Heart left ventricle (tissue), 16 donors: ENCODE measurements at regions of chr13 and their contacts with region 1.

Region 1: DNA sequence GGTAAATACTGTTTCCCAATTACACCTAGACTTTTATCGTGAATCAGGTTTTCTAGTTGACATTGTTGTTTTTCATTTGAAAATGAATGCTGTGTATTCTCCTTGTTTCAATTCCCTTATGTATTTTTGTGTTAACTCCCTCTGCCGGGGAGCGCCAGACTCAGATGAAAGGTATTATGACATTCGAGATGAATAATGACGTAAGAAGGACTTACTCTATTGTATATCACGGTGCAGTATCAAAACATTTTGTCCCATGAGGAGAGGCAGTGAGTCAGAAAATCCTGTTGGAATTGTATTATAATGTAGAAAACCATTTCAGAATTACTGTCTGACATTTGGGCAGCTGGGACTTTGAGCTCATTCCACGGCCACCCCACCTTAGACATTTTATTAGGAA is 61.6 kb downstream of the LRCH1 start:
- DNase-seq: no peak
- ATAC-seq: peak in 2 of 4 donors; percentile 57 to 68
- H3K4me3 ChIP-seq: no peak overlapping the region
- H3K27ac ChIP-seq: peak overlapping the region in 10 of 12 donors; percentile 1 to 84 (median 78)
- H3K4me1 ChIP-seq: peaks cover 3 to 59% (median 38%) of the 10 kb centered on the region in 12 donors
- H3K27me3 ChIP-seq: no peaks in the 10 kb centered on the region
- CTCF ChIP-seq: peak in 3 of 12 donors; percentile 16 to 24 (median 21)
- POLR2A ChIP-seq: no peak

Region 2: DNA sequence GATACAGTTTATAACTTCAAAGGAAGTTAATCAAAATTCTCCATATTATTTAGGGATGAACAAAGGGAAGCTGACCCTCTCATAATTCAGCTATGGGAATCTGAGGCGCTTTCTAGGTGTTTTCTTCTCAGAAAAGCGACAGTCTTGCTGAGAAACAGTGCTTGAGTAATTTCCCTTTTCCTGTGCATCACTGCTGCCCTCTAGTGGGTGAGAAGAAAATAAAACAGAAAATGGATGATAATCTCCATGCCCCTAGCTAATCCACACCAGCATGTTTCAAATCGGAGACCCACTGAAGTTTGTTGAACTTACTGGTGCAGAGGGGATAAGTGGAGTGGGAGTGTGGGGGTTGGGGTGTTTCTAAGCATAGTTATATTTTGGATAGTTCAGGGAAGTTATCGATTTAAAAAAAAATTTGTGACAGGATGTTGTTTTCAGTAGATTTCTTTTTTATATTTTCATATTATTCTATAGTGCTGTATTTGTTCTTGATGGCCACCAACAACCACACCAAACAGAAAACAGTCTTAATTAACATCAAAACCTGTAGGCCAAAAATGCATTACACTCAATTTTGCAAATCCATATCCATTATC is 454.0 kb before region 1 on chr13:
- intact Hi-C with region 1: no loop called
- DNase-seq: no peak
- ATAC-seq: peak in 3 of 4 donors; percentile 48 to 64 (median 55)
- H3K4me3 ChIP-seq: no peak overlapping the region
- H3K27ac ChIP-seq: peak overlapping the region in 1 of 12 donors; percentile 64
- H3K4me1 ChIP-seq: peaks cover 0 to 46% (median 0%) of the 10 kb centered on the region in 12 donors
- H3K27me3 ChIP-seq: peaks cover 0 to 15% (median 0%) of the 10 kb centered on the region in 9 donors
- CTCF ChIP-seq: peak; percentile 61 to 87 (median 72)
- POLR2A ChIP-seq: no peak

Region 3: GRCh38 chr13:46565808-46566750 is 48.5 kb before region 1 on chr13:
- intact Hi-C with region 1: loop called in 1 of 10 experiments (anchors 10 kb)
- DNase-seq: no peak
- ATAC-seq: peak in 1 of 4 donors; percentile 19
- H3K4me3 ChIP-seq: no peak overlapping the region
- H3K27ac ChIP-seq: peak overlapping the region in 3 of 12 donors; percentile 3 to 21 (median 11)
- H3K4me1 ChIP-seq: peaks cover 0 to 79% (median 38%) of the 10 kb centered on the region in 12 donors
- H3K27me3 ChIP-seq: no peaks in the 10 kb centered on the region
- CTCF ChIP-seq: no peak
- POLR2A ChIP-seq: no peak

Region 4: DNA sequence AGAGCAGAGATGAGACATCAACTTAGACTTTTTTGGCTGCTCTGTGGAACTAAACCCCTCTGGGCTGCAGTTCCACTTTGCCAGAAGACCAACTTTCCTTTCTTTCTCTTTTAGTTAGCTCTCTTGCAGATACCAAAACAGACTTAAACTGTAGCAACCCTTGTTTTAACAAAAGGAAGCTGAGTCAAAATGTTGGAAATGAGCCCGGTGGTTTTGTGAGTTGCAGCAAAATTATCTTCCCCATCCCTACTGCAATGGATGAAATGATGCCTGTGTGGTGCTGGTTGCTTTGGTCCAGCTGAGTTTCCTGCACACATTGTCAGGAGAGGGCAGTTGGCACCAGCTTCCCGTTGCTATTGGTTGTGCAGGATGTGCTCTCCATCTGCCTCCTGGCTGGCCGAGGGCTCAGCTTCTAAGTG is 53.7 kb after region 1 on chr13:
- intact Hi-C with region 1: loop called in 3 of 10 experiments (anchors 10 kb)
- DNase-seq: peak; percentile 47 to 66 (median 64)
- ATAC-seq: peak; percentile 44 to 66 (median 54)
- H3K4me3 ChIP-seq: peak overlapping the region in 7 of 12 donors; percentile 16 to 37 (median 26)
- H3K27ac ChIP-seq: peak overlapping the region; percentile 18 to 84 (median 57)
- H3K4me1 ChIP-seq: peaks cover 12 to 83% (median 54%) of the 10 kb centered on the region in 12 donors
- H3K27me3 ChIP-seq: no peaks in the 10 kb centered on the region
- CTCF ChIP-seq: no peak
- POLR2A ChIP-seq: no peak

Region 5: DNA sequence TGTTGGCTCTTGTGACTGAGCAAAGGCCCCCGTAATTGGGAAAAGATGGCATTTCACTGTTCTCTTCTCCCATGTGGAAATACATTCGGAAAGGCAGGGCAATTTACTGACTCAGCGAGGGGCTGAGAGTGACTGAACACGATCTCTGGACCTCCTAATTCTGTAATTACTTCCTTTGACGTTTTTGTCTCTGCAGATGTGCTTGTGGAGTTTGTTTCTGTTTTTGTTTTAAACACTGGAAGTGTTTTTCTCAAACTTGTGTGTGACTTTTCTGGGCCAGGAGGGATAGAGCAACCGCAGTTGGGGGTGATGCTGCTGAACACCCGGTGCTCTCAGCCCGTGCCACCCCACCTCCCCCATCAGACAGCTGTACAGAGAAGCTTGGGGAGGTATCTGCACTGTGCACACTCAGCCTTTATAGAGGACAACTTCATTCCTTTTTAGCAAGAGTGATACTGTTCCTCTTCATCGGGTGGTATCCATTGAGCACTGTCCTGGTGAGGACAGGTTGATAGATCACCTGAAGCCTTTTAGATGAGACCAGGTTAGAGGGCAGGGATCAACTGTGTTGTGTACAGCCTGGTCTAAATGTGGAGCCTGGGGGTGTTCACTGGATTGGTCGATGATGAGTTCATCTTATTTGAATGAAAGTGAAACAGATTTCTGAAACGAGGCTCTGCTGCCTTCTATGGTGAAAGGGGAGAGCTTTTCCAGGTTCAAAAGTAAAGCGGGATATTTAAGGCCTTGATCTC is 65.0 kb after region 1 on chr13:
- intact Hi-C with region 1: loop called in 1 of 10 experiments (anchors 10 kb)
- DNase-seq: peak in 1 of 5 donors; percentile 39
- ATAC-seq: peak; percentile 64 to 87 (median 72)
- H3K4me3 ChIP-seq: peak overlapping the region in 10 of 12 donors; percentile 8 to 52 (median 40)
- H3K27ac ChIP-seq: peak overlapping the region in 11 of 12 donors; percentile 15 to 87 (median 69)
- H3K4me1 ChIP-seq: peaks cover 3 to 65% (median 40%) of the 10 kb centered on the region in 12 donors
- H3K27me3 ChIP-seq: no peaks in the 10 kb centered on the region
- CTCF ChIP-seq: peak in 8 of 12 donors; percentile 13 to 46 (median 22)
- POLR2A ChIP-seq: no peak